Posterior vena cava (tissue), 2 donors: ENCODE measurements at regions of chr7 and their contacts with region 1.

Region 1: DNA sequence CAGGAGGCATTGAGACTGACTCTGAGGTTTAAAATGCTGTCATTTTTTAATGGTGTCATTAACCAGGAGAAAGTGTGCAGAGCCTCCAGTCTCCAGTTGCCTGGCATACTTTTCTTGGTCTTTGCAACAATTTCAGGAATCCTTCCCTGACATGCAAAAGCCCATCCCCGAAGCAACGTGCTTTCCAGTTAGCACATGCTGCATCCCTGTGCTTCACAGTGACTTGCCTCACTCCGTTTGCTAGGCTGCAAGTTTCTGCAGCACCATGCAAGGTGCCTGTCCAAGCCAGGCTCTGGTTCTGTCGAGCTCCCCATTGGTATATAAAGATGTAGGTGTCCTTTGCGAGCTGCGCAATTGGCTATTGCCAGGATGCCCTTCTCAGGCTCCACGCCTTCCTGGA is 135.0 kb downstream of the GALNT17 start:
- DNase-seq: no peak

Region 2: DNA sequence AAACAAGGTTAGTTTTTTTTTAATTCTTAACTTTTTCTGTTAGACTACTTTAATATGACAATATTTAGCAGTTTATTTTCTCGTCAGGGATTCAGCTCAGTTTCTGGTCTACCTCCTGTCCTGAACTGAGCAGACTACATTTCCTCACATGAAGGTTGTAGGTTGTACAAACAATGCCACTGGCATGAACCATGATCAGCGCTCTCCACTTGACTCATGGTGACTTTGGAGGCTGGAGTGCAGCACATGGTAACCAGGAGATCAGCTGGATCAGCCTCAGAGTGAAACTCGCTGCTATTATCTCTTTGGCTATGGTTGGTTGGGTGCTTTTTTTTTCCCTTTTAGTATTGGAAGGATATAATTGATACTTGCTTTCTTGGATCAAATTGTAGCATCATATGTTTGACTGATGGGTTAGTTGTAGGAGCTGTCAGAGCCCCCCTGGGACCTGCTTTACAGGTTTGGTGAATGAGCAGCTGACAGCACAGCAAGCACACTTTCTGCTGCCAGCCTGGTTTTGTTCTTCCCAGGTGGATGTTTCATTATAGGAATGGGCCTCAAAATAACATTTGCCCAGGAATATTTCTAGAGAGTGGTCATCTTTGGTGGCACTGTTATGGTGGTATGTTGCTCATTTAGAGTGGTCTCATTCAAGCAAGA is 1112.3 kb before region 1 on chr7:
- intact Hi-C with region 1: loop called in 1 of 2 experiments (anchors 5 kb)
- DNase-seq: no peak